HCT116 (cell line): ENCODE measurements at regions of chr18 and their contacts with region 1.

Region 1: DNA sequence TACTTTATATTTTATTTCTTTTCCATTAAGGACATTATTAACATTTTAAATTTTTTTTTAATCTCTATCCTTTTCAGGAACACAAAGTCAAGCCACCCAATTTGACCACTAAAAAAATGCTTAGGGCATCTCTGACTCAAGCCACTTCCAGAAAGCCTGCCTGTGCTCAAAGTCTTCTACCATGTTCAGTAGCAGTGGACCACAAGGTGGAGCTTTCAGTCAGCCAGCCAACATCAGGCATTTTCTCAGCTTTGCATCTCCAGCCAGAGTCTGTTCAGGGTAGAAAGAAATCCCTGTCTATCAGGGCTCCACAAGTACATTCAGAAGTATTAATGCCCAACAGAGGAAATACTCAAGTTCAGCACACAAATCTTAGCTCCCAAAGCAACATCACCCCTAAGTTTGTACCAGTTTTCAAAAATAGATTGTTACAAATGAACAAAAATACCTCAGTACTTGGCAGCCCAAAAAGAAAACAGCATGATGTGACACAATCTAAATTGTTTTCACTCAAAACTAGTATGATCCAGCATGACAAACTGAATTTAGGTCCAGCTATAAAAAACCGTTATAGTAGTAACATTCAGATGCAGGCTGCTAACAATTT is 37.6 kb downstream of the C18orf63 start:
- DNase-seq: peak; percentile 29
- ATAC-seq: peak; percentile 86
- H3K4me3 ChIP-seq: no peak overlapping the region
- H3K27ac ChIP-seq: no peak overlapping the region
- H3K4me1 ChIP-seq: no peaks in the 10 kb centered on the region
- H3K27me3 ChIP-seq: peaks cover 23% of the 10 kb centered on the region
- CTCF ChIP-seq: peak; percentile 48 to 62 (median 59); a peak in 5 of 6 replicates
- POLR2A ChIP-seq: no peak
- RAD21 ChIP-seq: peak; percentile 62

Region 2: DNA sequence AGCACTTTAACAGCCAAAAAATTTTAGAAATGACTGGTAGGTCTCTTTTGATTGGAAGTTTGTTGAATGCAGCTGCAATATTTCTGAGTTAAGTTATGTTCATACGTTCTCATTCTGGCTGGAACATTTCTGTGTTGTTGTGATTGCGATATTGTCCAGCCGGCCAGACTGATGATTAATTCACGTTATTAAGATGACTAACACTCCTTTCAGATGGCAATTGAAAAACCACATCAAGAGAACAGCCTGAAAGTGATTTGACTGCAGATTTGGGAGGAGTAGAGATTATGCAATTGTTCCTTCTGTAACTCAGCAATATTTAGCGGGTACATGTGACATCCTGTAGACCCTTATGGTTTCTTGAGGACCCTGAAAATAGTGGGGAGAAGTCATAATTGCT is 339.3 kb before region 1 on chr18:
- CTCF ChIA-PET with region 1: no interaction called
- POLR2A ChIA-PET with region 1: no interaction called
- RAD21 ChIA-PET with region 1: no interaction called
- intact Hi-C with region 1: no loop called
- DNase-seq: no peak
- ATAC-seq: no peak
- H3K4me3 ChIP-seq: no peak overlapping the region
- H3K27ac ChIP-seq: no peak overlapping the region
- H3K4me1 ChIP-seq: no peaks in the 10 kb centered on the region
- H3K27me3 ChIP-seq: no peaks in the 10 kb centered on the region
- CTCF ChIP-seq: no peak
- POLR2A ChIP-seq: no peak
- RAD21 ChIP-seq: no peak

Region 3: DNA sequence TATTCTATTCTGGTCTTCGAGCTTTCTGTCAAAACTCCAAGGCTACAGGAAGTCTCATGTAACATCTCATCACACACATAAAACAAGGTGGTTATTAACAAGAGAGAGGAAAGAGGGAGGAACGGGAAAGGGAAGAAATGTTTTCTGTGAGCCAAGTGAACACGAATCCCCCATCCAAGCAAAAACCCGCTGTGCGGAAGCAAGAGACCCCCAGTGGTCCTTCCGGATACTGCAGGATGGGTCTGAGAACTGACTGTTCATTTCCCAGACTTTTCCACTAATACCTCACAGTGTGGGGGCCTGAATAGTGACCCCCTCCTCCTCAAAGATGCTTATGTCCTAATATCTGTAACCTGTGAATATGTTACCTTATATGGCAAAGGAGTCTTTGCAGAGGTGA is 122.9 kb after region 1 on chr18:
- CTCF ChIA-PET with region 1: no interaction called
- POLR2A ChIA-PET with region 1: no interaction called
- RAD21 ChIA-PET with region 1: no interaction called
- intact Hi-C with region 1: loop called (anchors 1 kb)
- DNase-seq: no peak
- ATAC-seq: peak; percentile 93
- H3K4me3 ChIP-seq: no peak overlapping the region
- H3K27ac ChIP-seq: no peak overlapping the region
- H3K4me1 ChIP-seq: no peaks in the 10 kb centered on the region
- H3K27me3 ChIP-seq: peaks cover 7% of the 10 kb centered on the region; the same call in 1 of the 2 replicates
- CTCF ChIP-seq: peak; percentile 33 to 81 (median 69); a peak in 5 of 6 replicates
- POLR2A ChIP-seq: no peak
- RAD21 ChIP-seq: peak; percentile 54

Region 4: GRCh38 chr18:74551936-74552555 is 198.8 kb after region 1 on chr18:
- CTCF ChIA-PET with region 1: interaction called, 57 read pairs
- POLR2A ChIA-PET with region 1: no interaction called
- RAD21 ChIA-PET with region 1: interaction called in 1 of 2 experiments, 6 read pairs
- intact Hi-C with region 1: loop called (anchors 1 kb)
- DNase-seq: peak; percentile 72
- ATAC-seq: peak; percentile 100
- H3K4me3 ChIP-seq: no peak overlapping the region
- H3K27ac ChIP-seq: no peak overlapping the region
- H3K4me1 ChIP-seq: no peaks in the 10 kb centered on the region
- H3K27me3 ChIP-seq: peaks cover 18% of the 10 kb centered on the region
- CTCF ChIP-seq: peak; percentile 67 to 80 (median 77)
- POLR2A ChIP-seq: no peak
- RAD21 ChIP-seq: peak; percentile 77

Region 5: GRCh38 chr18:76349067-76349715 is 1995.9 kb after region 1 on chr18:
- CTCF ChIA-PET with region 1: no interaction called
- POLR2A ChIA-PET with region 1: no interaction called
- RAD21 ChIA-PET with region 1: no interaction called
- intact Hi-C with region 1: loop called (anchors 5 kb)
- DNase-seq: peak; percentile 46
- ATAC-seq: peak; percentile 75
- H3K4me3 ChIP-seq: no peak overlapping the region
- H3K27ac ChIP-seq: no peak overlapping the region
- H3K4me1 ChIP-seq: no peaks in the 10 kb centered on the region
- H3K27me3 ChIP-seq: no peaks in the 10 kb centered on the region
- CTCF ChIP-seq: peak; percentile 59 to 91 (median 87); a peak in 5 of 6 replicates
- POLR2A ChIP-seq: no peak
- RAD21 ChIP-seq: peak; percentile 84